Activated CD4-positive, alpha-beta T cell treated with anti-CD3 and anti-CD28 coated beads, Interleukin-2, amount 10 ng/mL, durations not matched to agents 7 days and 5 days (primary cell): ENCODE measurements at regions of chr3 and their contacts with region 1.

Region 1: DNA sequence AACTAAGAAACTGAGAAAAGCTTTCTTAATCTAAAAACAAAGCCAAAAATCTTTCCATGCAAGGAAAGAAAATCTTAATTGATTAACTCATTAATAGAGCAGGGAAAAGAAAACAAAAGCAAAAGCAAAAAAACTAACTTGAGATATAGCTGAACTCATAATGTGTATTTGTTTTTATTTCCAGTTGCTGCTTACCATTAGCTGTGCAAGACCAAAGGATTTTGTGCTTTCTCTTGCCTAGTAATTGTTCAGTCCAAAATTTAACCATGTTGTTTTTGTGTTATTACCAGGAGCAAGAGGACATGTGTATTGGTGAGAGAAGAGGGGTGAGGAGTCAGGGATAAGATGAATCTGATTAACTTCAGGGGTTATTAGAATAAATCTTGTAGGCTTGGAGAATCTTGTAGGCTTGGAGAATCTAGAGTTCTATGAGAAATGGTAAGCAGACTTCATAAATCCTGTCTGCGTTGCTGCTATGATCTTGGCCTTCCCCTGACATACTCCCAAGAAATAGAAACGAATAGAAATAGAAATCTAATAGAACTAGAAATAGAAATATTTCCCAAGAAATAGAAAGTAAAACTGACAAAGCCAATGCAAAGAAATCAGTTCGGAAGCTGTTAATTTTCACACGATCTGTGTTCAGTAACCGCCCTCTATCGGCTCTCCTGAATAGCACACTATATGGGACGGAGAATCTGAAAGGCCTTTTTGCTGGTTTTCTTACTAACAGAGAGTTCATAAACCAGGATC is 72.6 kb upstream of the TNFSF10 start:
- DNase-seq: peak; percentile 72
- H3K4me3 Mint-ChIP-seq: peak overlapping the region; percentile 74
- H3K27ac Mint-ChIP-seq: peak overlapping the region; percentile 84
- H3K4me1 Mint-ChIP-seq: peaks cover 62% of the 10 kb centered on the region
- H3K27me3 Mint-ChIP-seq: no peaks in the 10 kb centered on the region

Region 2: GRCh38 chr3:171293142-171293782 is 1302.6 kb before region 1 on chr3:
- CTCF ChIA-PET with region 1: no interaction called
- POLR2A ChIA-PET with region 1: no interaction called
- DNase-seq: no peak
- H3K4me3 Mint-ChIP-seq: no peak overlapping the region
- H3K27ac Mint-ChIP-seq: no peak overlapping the region
- H3K4me1 Mint-ChIP-seq: peaks cover 27% of the 10 kb centered on the region
- H3K27me3 Mint-ChIP-seq: no peaks in the 10 kb centered on the region

Region 3: GRCh38 chr3:172501560-172501959 is 94.3 kb before region 1 on chr3:
- CTCF ChIA-PET with region 1: interaction called, 23 read pairs
- POLR2A ChIA-PET with region 1: no interaction called
- DNase-seq: no peak
- H3K4me3 Mint-ChIP-seq: no peak overlapping the region
- H3K27ac Mint-ChIP-seq: no peak overlapping the region
- H3K4me1 Mint-ChIP-seq: peaks cover 19% of the 10 kb centered on the region
- H3K27me3 Mint-ChIP-seq: no peaks in the 10 kb centered on the region

Region 4: GRCh38 chr3:172522871-172523818 is 72.7 kb before region 1 on chr3 and contains the start of gene TNFSF10:
- CTCF ChIA-PET with region 1: interaction called, 41 read pairs
- POLR2A ChIA-PET with region 1: interaction called, 11 read pairs
- DNase-seq: peak; percentile 85
- H3K4me3 Mint-ChIP-seq: peak within 1 kb of the TSS; percentile 95
- H3K27ac Mint-ChIP-seq: peak within 1 kb of the TSS; percentile 98
- H3K4me1 Mint-ChIP-seq: peaks cover 50% of the 10 kb centered on the region
- H3K27me3 Mint-ChIP-seq: no peaks in the 10 kb centered on the region
- total RNA-seq, gene TNFSF10: 83.8 to 97.9 TPM

Region 5: GRCh38 chr3:172580680-172581401 is 15.0 kb before region 1 on chr3:
- CTCF ChIA-PET with region 1: interaction called, 15 read pairs
- POLR2A ChIA-PET with region 1: no interaction called
- DNase-seq: no peak
- H3K4me3 Mint-ChIP-seq: peak overlapping the region; percentile 64
- H3K27ac Mint-ChIP-seq: peak overlapping the region; percentile 93
- H3K4me1 Mint-ChIP-seq: peaks cover 96% of the 10 kb centered on the region
- H3K27me3 Mint-ChIP-seq: no peaks in the 10 kb centered on the region

Region 6: DNA sequence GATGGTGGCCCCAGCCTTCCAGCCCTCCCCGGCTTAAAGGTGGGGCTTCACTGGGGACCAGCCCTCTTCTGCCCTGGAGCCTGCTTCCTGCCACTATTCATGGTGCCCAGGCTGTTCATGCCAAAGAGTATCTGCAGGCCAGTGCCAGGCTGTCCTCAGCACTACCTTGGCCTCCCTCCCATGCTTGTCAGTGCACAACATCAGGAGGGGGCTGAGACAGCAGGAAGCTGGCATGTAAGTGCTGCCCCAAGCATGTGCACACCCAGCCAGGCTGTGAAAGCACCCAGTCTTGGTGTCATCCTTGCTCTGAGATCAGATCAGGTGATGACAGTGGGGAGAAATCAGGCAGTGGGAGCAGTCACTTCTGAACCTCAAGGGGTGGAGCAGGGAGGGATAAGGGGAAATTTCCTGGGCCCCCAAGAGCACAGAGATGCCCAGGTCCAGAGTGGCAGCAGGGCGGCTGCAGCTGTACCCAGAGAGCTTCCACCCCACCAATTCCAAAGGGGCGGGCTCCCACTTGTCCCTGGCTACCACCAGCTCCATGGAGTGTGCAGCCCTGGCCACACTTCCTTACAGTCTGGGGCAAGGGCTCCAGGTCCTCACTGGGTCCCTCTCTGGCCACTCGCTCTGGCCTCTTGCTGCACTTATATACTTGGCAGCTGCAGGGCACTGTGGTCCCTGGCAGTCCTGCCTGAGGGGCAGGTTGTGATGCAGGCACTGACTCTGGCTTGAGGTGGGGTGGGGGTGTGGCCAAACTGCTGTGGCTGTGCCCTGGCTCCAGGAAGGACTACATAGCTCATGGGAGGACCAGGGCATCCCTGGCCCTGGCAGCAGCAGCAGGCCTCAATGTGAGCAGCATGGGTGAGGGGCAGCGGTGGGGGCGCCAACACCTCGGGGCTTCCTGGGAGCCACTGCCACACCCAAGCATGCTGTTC is 18.8 kb after region 1 on chr3:
- CTCF ChIA-PET with region 1: interaction called, 25 read pairs
- POLR2A ChIA-PET with region 1: no interaction called
- DNase-seq: no peak
- H3K4me3 Mint-ChIP-seq: no peak overlapping the region
- H3K27ac Mint-ChIP-seq: peak overlapping the region; percentile 25
- H3K4me1 Mint-ChIP-seq: peaks cover 19% of the 10 kb centered on the region
- H3K27me3 Mint-ChIP-seq: no peaks in the 10 kb centered on the region